ENCODE measurements at regions of chr9 and their contacts with region 1.

Region 1: DNA sequence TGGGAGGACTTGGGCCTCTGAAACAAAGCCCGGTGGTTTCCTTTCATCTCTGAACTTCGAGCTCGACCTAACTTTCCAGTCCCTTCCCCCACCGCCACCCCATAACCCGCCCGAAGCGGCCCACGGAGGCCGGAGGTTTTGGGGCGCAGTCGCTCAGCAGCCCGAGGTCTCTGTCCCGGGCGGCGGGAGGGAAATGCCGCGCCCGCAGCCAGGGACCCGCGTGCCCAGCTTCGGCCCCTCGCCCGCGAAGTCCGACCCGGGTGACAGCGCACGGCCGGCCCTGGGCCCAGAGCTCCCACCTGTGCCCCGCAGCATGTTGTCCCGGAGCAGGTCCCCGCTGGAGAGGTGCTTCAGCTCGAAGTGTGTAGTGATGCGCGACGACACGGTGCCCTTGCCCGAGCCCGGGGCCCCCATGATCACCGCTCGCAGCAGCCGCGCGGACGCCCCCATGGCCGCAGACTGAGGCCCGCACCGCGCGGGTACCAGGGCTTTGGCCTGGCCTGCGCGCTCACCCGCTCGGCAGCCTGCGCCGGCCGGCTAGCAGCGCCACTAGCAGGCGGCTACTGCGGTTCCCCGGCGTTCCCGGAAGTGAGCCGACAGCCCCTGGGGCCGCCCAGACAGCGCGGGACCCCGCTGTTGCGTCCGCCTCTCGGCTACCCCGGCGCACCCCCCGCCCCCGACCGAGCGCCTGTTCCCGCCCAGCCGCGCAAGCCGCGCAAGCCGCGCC is at the start of gene AK3:
- DNase-seq: peak; percentile 84 to 93
- H3K4me3 ChIP-seq: peak within 1 kb of the TSS; percentile 75
- H3K4me1 ChIP-seq: peaks cover 21% of the 10 kb centered on the region
- H3K27me3 ChIP-seq: no peaks in the 10 kb centered on the region

Region 2: DNA sequence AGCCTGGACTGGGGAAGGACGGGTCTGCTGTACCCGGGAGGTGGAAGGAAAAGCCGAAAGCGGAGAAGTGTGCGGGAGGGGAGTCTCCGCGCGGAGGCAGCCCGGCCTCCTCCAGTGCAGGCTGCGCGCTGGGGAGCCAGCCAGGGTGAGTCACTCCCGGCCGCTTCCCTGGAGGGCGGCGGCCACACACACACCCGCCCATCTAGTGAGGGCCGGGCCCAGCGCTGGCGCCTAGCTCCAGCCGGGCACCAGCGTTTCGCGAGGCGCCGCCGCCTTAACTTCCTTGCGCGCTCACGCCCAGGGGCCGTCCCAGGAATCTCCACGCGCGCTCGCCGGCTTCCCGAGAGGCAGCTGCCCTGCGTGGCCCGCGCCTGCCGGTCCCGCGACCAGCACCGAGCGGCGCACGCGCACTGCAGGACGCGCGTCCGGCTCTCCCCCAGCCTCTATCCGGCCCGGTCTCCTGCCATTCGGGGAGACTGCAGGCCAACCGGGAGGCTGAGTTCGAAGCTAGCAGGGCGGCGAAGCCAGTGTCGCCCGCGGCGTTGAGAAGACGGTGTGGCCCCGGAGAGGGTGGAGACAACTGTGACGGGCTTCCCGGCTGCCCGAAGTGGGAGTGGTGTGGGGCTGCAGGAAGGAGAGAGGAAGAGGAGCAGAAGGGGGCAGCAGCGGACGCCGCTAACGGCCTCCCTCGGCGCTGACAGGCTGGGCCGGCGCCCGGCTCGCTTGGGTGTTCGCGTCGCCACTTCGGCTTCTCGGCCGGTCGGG is 244.0 kb after region 1 on chr9 and contains the start of gene JAK2:
- in situ Hi-C with region 1: loop called (anchors 10 kb)
- DNase-seq: peak; percentile 92 to 95
- H3K4me3 ChIP-seq: peak within 1 kb of the TSS; percentile 52
- H3K4me1 ChIP-seq: peaks cover 21% of the 10 kb centered on the region
- H3K27me3 ChIP-seq: no peaks in the 10 kb centered on the region

Region 3: GRCh38 chr9:5025416-5025815 is 284.6 kb after region 1 on chr9:
- in situ Hi-C with region 1: no loop called
- DNase-seq: no peak
- H3K4me3 ChIP-seq: no peak overlapping the region
- H3K4me1 ChIP-seq: no peaks in the 10 kb centered on the region
- H3K27me3 ChIP-seq: no peaks in the 10 kb centered on the region

Measured in HAP-1 (cell line).